ENCODE measurements at regions of chr17 and their contacts with region 1.

Region 1: DNA sequence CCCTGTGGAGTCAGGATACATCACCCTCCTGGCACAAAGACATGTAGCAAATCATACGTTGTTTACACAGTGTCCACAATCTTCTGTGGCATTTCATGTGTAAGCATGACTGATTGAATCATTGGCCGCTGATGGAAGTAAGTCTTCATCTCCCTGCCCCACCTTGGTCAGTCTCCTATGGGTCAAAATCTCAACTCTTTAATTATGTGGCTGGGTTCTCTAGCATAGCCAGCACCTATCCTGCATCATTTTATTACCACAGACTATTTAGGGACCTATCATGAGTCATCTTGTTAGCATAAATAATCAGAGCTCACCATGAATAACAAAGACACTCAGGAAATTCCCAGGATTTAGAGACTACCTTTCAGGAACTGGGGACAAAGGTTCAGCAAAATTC is 15.9 kb downstream of the TANC2 start:
- DNase-seq: no peak
- H3K4me3 Mint-ChIP-seq: no peak overlapping the region
- H3K27ac Mint-ChIP-seq: no peak overlapping the region
- H3K4me1 Mint-ChIP-seq: peaks cover 9% of the 10 kb centered on the region
- H3K27me3 Mint-ChIP-seq: no peaks in the 10 kb centered on the region
- CTCF ChIP-seq: no peak

Region 2: DNA sequence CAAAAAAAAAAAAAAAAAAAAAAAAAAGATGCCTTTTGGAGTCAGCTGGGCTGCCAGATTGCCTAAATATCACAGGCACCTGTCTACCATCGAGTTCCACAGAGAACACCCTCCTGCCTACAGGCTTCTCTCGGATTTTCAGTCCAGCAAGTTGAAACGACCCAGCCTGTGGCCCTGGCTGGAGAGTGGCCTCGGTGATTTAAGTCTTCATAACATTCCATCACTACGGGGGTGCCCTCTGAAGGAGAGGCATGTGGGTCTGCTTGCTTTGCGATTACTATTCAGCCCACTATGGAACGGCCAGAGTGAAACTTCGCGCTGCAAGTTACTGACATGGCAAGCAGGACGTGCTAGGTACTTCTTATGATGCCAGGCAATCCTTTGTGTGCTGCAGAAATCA is 216.6 kb before region 1 on chr17:
- CTCF ChIA-PET with region 1: interaction called, 11 read pairs
- intact Hi-C with region 1: no loop called
- DNase-seq: no peak
- H3K4me3 Mint-ChIP-seq: no peak overlapping the region
- H3K27ac Mint-ChIP-seq: no peak overlapping the region
- H3K4me1 Mint-ChIP-seq: no peaks in the 10 kb centered on the region
- H3K27me3 Mint-ChIP-seq: no peaks in the 10 kb centered on the region
- CTCF ChIP-seq: no peak

Region 3: DNA sequence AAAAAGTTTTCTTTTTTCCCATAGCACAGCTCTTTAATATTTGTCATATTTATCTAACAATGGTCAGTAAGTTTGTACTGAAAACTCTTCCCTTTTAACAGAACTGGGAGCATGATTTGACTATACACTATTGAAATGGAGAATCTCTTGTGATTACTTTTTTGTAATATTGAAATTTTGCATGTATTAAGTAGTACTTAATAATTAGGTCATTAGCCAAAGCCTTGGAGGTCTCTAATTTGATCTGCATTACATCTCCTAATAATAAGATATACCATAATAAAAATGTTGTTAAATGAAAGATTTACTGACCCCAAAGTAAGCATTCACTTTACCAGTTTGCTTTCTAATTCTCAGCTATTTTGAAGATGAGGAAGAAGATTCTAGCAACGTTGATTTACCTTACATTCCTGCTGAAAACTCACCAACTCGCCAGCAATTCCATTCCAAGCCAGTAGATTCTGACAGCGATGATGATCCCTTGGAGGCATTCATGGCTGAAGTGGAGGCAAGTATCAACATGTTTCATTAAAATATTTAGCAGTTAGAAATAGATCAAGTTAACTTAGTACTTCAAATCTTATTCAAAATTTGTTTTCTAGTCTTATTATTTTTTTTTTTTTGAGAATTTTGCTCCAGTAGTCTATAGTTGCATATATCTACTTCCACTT is 810.3 kb after region 1 on chr17:
- CTCF ChIA-PET with region 1: no interaction called
- intact Hi-C with region 1: no loop called
- DNase-seq: no peak
- H3K4me3 Mint-ChIP-seq: no peak overlapping the region
- H3K27ac Mint-ChIP-seq: no peak overlapping the region
- H3K4me1 Mint-ChIP-seq: no peaks in the 10 kb centered on the region
- H3K27me3 Mint-ChIP-seq: no peaks in the 10 kb centered on the region
- CTCF ChIP-seq: no peak

Measured in Calu3 (cell line).